Posterior vena cava (tissue), 2 donors: ENCODE measurements at regions of chr3 and their contacts with region 1.

Region 1: DNA sequence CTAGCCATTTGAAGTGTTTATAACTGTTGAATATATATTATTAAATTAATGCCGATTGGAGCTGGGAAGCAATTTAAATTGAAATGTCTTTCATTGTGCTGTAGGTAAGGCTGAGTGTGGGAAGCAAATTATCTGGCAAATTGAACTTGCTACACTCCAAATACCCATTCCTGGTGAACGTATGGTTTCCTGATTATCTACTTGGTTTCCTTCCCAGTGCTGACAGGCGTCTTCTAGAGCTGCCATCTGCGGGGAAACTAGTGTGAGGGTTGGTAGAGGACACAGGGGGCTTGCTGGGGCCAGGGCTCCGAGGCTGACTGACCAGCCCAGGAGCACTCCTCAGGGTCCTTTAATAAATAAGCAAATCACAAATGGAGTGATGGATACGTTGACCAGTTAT is 581.4 kb upstream of the LMCD1 start:
- DNase-seq: no peak

Region 2: GRCh38 chr3:7754653-7755441 is 165.4 kb before region 1 on chr3:
- intact Hi-C with region 1: no loop called
- DNase-seq: no peak

Region 3: DNA sequence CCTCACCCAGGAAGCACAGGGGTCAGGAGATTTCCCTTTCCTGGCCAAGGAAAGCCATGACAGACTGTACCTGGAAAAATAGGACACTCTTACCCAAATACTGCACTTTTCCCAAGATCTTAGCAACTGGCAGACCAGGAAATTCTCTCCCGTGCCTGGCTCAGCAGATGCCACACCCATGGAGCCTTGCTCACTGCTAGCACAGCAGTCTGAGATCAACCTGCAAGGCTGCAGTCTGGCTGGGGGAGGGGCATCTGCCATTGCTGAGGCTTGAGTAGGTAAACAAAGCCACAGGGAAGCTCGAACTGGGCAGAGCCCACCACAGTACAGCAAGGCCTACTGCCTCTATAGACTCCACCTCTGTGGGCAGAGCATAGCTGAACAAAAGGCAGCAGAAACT is 14.2 kb after region 1 on chr3:
- intact Hi-C with region 1: loop called in 1 of 2 experiments (anchors 1 kb)
- DNase-seq: no peak

Region 4: DNA sequence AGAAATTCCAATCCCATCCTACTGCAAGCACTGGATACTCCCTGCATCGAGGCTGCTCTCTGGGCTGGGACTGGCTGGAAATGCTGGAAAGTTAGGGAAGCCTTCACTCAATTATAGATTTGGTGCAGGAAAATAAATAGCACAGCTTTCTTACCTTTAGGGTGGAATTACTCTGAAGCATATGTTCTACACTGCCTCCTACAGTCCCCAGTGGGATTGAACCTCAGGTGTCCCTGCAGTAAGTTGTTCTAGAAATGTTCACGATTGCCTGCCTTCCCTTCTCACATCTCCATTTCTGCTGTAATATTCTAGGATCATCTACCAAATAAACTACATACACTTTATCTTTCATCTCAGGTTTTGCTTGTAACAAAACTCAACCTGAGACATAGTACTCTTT is 44.7 kb after region 1 on chr3:
- intact Hi-C with region 1: no loop called
- DNase-seq: no peak